ENCODE measurements at regions of chr5 and their contacts with region 1.

Region 1: DNA sequence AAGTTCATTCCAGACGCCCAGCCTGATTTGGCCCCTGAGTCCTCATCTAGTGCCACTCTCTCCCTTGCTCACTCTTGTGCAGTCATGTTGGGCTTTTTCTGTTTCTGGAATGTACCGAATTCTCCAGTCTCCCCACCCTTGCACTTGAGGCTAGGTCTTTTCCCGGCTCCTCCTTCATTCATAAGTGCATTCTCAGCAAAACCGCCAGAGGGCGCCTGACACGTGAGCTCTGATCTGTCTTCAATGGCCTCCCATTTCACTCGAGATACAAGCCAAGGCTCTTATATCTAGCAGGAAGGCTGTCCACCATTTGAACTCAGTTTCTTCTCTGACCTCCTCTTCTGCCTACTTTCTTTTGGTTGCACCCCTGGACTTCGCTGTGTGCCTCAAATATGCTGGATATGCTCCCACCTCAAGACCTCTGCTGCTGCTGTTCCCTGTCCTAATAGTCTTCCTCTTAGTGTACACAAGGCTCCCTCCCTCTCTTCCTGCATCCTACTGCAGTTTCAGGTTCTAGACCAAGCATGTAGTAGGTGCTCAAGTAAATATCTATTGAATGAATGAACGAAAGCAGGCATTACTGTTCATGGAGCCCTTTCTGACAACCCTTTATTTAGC is 568.1 kb upstream of the WWC1 start:
- DNase-seq: peak; percentile 71 to 79 (median 75)
- ATAC-seq: peak; percentile 89
- H3K4me3 ChIP-seq: no peak overlapping the region
- H3K27ac ChIP-seq: no peak overlapping the region
- H3K4me1 ChIP-seq: no peaks in the 10 kb centered on the region
- H3K27me3 ChIP-seq: peaks cover 0 to 3% of the 10 kb centered on the region in 2 donors
- CTCF ChIP-seq: peak; percentile 61 to 90 (median 87)
- POLR2A ChIP-seq: no peak

Region 2: DNA sequence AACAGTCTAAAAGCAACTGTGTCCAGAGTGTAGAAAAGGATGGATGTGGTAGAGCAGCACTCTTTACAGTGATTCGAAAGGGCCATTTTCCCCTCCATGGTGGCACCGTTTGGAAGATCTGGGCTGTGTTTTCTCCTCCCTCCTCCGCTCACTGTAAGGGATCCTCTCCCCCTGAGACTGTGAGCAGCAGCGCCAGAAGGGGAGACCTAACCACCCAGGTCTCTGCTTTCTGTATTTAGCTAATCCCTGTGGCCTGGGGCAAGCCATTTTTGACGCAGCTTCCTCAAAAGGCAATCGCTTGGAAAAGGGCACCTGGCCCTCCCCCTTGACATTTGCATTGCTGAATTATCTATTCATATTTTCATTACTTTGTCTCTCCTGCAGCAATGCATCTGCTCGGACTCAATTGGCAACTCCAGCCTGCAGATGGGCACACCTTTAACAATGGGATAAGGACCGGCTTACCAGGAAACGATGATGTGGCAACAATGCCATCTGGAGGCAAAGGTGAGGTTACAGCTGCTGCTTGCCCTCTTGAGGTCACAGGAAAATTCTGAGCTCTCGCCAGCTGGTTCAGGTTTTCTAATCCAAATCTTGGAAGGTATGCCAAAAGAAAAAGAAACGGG is 323.8 kb after region 1 on chr5:
- intact Hi-C with region 1: loop called (anchors 10 kb)
- DNase-seq: peak; percentile 66 to 82 (median 78)
- ATAC-seq: peak; percentile 85
- H3K4me3 ChIP-seq: no peak overlapping the region
- H3K27ac ChIP-seq: no peak overlapping the region
- H3K4me1 ChIP-seq: no peaks in the 10 kb centered on the region
- H3K27me3 ChIP-seq: no peaks in the 10 kb centered on the region
- CTCF ChIP-seq: peak in 6 of 7 experiments; percentile 25 to 73 (median 61)
- POLR2A ChIP-seq: no peak

Region 3: DNA sequence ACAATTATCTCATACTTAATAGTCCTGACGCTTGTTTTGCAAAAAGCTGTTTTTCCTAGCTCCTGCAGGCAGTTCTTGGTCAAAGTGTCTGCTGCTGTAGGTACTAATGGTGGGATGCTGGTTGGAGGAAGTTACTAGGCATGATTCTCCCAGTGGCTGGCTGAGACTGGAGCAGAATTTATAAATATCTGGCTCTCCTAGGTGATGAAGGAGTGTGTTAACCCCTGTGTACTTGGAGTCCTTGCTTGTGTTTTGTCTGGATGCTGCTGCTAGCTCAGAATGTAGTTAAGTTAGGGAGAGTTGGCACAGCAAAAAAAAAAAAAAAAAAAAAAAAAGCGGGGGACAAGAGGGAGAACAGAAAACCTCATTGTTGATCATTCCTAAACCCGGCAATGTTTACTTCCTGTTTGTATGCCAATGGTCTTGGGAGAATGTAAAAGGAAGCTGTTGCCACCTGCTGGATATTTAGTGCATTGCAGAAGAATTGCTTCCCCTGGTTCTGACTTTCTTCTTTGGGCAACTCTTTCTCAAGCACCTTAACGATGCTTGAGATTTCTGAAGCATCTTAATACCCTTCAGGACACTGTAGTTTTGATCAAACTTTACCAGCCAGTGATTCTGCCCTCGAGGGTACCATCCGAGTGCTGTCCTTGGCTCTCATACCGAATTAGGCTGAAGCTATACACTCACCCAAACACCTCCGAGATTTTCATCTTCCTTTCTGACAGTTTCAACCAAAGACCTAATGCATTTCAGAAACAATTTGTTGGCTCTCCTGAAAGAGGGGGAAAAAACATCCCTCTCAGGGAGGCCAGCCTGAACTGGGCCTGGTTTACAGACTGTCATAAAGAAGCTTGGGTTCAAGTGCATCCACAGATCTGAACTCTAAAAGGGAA is 496.4 kb after region 1 on chr5:
- intact Hi-C with region 1: loop called (anchors 10 kb)
- DNase-seq: peak; percentile 63 to 78 (median 68)
- ATAC-seq: peak; percentile 83
- H3K4me3 ChIP-seq: no peak overlapping the region
- H3K27ac ChIP-seq: no peak overlapping the region
- H3K4me1 ChIP-seq: peaks cover 5% of the 10 kb centered on the region
- H3K27me3 ChIP-seq: no peaks in the 10 kb centered on the region
- CTCF ChIP-seq: peak; percentile 74 to 97 (median 95)
- POLR2A ChIP-seq: no peak

Region 4: GRCh38 chr5:168317521-168318147 is 594.3 kb after region 1 on chr5:
- intact Hi-C with region 1: no loop called
- DNase-seq: peak; percentile 58 to 89 (median 73)
- ATAC-seq: peak; percentile 69
- H3K4me3 ChIP-seq: no peak overlapping the region
- H3K27ac ChIP-seq: peak overlapping the region; percentile 78 to 93 (median 92)
- H3K4me1 ChIP-seq: peaks cover 62% of the 10 kb centered on the region
- H3K27me3 ChIP-seq: no peaks in the 10 kb centered on the region
- CTCF ChIP-seq: no peak
- POLR2A ChIP-seq: peak in 2 of 3 donors; percentile 16 to 31